ENCODE measurements at regions of chr6 and their contacts with region 1.

Region 1: DNA sequence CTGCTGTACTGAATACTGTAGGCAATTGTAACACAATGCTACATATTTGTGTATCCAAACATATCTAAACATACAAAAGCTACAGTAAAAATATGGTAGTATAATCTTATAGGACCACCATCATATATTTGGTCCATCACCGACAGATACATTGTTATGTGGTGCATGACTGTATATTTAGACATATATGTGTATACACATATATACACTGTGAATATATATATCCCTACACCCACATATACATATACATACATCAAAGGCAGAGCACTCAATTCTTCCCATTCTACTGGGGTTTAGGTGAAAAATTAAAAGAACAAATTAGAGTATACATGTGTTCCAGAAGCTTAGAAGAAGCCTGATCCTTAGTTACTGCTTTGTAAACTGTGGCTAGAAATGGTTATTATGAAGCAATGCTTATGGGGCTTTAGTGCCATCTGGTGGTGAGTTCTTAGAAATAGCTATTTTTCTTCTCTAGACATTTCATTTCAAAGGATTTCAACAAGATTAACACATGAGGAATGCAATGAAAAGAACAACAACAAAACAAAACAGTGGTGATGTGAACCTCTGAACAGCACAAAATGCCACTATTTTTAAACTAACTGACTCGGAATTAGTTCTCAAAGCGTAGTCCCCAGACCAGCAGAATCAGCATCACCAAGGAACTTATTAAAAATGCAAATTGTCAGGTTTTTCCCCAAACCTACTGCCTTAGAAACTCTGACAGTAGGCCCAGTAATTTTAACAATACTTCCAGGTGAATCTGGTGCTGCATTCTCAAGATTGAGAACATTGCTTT is 38.0 kb downstream of the PKHD1 start:
- DNase-seq: peak; percentile 4
- H3K4me3 ChIP-seq: no peak overlapping the region
- CTCF ChIP-seq: peak; percentile 48

Region 2: DNA sequence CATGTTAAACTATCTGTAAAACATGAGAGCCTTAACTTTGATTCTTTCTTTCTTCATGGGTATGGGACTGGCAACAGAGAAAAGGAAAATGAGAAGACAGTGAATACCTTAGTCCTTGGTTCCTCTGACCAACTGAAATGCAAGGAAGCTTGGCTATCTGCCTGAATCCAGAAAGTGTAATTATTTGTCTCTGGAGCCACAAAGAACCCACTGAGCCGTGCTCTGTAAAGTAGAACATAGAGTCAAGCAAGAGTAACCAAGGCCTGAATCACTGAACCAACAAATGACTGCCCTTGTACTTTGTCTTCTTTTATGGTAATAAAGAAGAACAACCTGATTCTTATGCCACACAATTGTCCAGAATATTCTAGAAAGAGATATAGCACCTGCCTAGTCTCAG is 10.4 kb after region 1 on chr6:
- CTCF ChIA-PET with region 1: interaction called, 37 read pairs
- POLR2A ChIA-PET with region 1: no interaction called
- DNase-seq: no peak
- H3K4me3 ChIP-seq: no peak overlapping the region
- CTCF ChIP-seq: no peak

Region 3: GRCh38 chr6:52577022-52577777 is 527.7 kb after region 1 on chr6 and contains the start of gene TRAM2:
- CTCF ChIA-PET with region 1: no interaction called
- POLR2A ChIA-PET with region 1: no interaction called
- DNase-seq: no peak
- H3K4me3 ChIP-seq: peak within 1 kb of the TSS; percentile 95
- CTCF ChIP-seq: no peak